ENCODE measurements at regions of chr1 and their contacts with region 1.

Region 1: DNA sequence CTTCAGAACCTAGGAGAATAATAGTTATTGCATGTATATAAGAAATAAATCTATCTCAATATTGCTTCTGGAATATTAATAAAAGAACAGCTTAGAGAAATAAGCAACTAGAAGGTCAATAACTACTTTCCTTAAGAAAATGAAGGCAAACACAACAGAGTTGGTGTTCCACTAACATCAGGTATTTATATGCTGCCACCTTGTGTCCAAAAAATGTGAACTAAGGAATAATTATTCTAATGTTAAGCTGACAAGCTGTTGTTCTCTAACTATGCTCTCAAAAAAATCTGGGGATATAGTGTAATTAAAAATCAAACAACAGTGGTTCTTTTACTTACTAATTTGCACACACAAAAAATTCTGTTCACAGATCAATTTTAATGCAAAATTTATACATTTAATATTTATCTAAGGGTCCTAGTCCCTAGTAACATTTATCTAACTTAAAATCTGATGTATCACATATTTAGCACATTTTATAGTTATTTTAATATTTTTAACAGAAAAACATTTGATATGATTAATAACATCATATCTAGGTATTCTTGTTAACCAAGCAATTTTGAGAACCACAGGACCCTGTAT is 39.6 kb downstream of the UCHL5 start:
- DNase-seq: peak; percentile 65
- H3K4me3 ChIP-seq: no peak overlapping the region
- H3K27ac ChIP-seq: no peak overlapping the region
- H3K4me1 ChIP-seq: peaks cover 5% of the 10 kb centered on the region
- H3K27me3 ChIP-seq: no peaks in the 10 kb centered on the region

Region 2: GRCh38 chr1:192609110-192610079 is 410.1 kb before region 1 on chr1:
- in situ Hi-C with region 1: loop called (anchors 10 kb)
- DNase-seq: no peak
- H3K4me3 ChIP-seq: no peak overlapping the region
- H3K27ac ChIP-seq: no peak overlapping the region
- H3K4me1 ChIP-seq: no peaks in the 10 kb centered on the region
- H3K27me3 ChIP-seq: no peaks in the 10 kb centered on the region

Region 3: DNA sequence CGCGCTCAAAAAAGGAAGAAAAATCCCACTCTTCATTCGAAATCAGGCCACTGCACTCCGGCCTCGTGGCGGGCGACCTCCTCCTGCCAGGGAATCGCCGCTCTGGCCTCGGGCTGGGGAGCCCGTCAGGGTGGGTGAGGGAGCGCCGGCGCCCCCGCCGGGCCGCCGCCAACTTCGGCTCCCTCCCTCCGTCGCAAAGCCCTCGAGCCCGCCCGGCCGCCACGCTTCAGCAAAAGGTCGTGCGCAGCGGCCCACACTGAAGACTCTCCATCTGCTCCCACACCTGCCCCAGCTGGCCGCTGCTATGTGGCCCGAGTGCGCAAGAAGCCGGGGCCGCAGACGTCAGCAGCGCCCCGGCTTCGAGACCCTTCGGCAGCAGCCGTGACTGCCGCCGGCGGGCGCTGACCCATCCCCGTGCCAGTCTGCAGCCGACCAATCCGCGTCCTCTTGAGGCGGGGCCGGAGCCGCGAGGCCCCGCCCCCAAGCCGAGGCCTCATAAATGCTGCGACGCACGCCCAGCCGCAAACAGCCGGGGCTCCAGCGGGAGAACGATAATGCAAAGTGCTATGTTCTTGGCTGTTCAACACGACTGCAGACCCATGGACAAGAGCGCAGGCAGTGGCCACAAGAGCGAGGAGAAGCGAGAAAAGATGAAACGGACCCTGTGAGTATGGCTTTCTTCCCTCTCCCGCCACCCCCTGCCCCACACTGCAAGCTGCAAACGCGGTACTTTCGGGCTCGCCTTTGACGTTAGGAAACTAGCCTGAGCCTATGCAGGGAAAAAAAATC is 210.8 kb before region 1 on chr1 and contains the start of gene RGS2:
- in situ Hi-C with region 1: loop called (anchors 25 kb)
- DNase-seq: peak; percentile 95
- H3K4me3 ChIP-seq: peak within 1 kb of the TSS; percentile 99
- H3K27ac ChIP-seq: peak within 1 kb of the TSS; percentile 59
- H3K4me1 ChIP-seq: peaks cover 23% of the 10 kb centered on the region
- H3K27me3 ChIP-seq: no peaks in the 10 kb centered on the region
- total RNA-seq, gene RGS2: 0.38 and 0.43 TPM in 2 replicates

Region 4: GRCh38 chr1:193085263-193085662 is 65.7 kb after region 1 on chr1:
- in situ Hi-C with region 1: no loop called
- DNase-seq: no peak
- H3K4me3 ChIP-seq: no peak overlapping the region
- H3K27ac ChIP-seq: no peak overlapping the region
- H3K4me1 ChIP-seq: no peaks in the 10 kb centered on the region
- H3K27me3 ChIP-seq: no peaks in the 10 kb centered on the region

Region 5: GRCh38 chr1:193827516-193827915 is 808.0 kb after region 1 on chr1:
- in situ Hi-C with region 1: no loop called
- DNase-seq: no peak
- H3K4me3 ChIP-seq: no peak overlapping the region
- H3K27ac ChIP-seq: no peak overlapping the region
- H3K4me1 ChIP-seq: no peaks in the 10 kb centered on the region
- H3K27me3 ChIP-seq: no peaks in the 10 kb centered on the region